SK-N-SH (cell line): ENCODE measurements at regions of chr7 and their contacts with region 1.

Region 1: DNA sequence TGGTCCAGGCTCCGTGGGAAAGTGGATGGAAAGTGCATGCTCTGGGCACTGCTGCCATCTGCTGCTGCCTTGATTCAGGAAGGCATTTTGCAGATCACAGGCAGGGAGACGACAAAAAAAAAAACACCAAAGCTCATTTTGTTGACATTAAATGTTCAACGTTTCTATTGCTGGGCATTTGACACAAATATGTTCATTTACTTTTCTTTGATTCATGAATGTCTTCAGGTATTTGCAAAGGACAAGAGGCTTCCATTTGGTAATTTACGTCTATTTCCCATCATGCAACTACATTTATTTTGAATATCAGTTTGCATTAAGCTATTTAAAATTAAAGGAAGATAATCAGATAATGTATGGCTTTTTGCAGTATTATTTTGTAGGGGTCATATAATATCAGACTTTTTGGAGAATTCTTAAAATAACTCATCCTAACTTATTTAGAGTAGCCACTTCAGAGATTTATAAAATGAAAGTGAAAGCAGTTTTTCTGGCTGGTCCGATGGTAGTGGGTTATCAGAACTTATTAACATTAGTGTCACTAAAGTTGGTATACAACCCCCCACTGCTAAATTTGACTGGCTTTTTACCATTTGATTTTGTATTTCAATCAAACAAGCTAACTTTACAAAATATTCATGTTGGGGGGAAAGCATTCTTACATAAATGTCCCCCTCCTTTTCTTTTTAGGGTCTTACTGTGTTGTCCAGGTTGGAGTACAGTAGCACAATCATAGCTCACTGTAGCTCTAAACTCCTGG is 65.3 kb downstream of the PDIA4 start:
- DNase-seq: peak; percentile 82
- H3K4me3 ChIP-seq: peak overlapping the region; percentile 56 to 69
- H3K27ac ChIP-seq: peak overlapping the region; percentile 24 to 73
- H3K4me1 ChIP-seq: no peaks in the 10 kb centered on the region; a peak in 2 of 4 replicates
- H3K27me3 ChIP-seq: no peaks in the 10 kb centered on the region
- CTCF ChIP-seq: peak; percentile 100
- EP300 ChIP-seq: no peak
- RAD21 ChIP-seq: peak; percentile 98

Region 2: GRCh38 chr7:148563583-148564274 is 399.3 kb before region 1 on chr7:
- CTCF ChIA-PET with region 1: interaction called, 17 read pairs
- POLR2A ChIA-PET with region 1: no interaction called
- DNase-seq: no peak
- H3K4me3 ChIP-seq: peak overlapping the region in 1 of 2 experiments; percentile 43; a peak in 2 of 4 replicates
- H3K27ac ChIP-seq: peak overlapping the region; percentile 13 to 79; a peak in 3 of 4 replicates
- H3K4me1 ChIP-seq: no peaks in the 10 kb centered on the region; a peak in 2 of 4 replicates
- H3K27me3 ChIP-seq: no peaks in the 10 kb centered on the region
- CTCF ChIP-seq: no peak
- EP300 ChIP-seq: no peak
- RAD21 ChIP-seq: no peak

Region 3: DNA sequence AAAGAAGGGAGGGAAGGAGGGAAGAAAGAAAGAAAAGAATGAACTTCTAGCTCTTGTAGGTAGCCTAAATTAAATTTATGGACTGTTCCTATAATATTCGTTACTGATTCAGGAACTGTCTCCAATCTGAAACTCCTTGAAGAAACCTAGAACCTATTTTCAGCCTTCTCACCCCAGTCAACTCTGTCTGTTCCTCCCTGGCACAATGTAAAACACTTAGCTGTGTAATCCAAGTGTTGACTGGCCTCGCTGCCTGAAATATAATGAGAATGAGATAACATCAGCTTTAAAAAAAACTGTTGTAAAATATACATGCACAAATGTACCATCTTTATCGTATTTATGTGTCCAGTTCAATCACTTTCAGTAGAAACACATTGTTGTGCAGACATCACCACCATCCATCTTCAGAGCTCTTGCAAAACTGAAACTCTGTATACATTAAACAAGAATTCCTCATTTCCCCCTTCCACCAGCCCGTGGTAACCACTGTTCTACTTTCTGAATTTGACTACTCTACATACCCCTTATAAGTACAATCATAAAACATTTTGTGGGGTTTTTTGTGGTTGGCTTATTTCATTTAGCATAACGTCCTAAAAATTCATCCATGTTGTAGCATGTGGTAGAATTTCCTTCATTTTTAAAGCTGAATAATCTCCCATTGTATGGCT is 378.7 kb before region 1 on chr7:
- CTCF ChIA-PET with region 1: interaction called, 114 read pairs
- POLR2A ChIA-PET with region 1: interaction called, 3 read pairs
- DNase-seq: no peak
- H3K4me3 ChIP-seq: no peak overlapping the region
- H3K27ac ChIP-seq: no peak overlapping the region
- H3K4me1 ChIP-seq: no peaks in the 10 kb centered on the region
- H3K27me3 ChIP-seq: peaks cover 17% of the 10 kb centered on the region; the same call in 1 of the 2 replicates
- CTCF ChIP-seq: no peak
- EP300 ChIP-seq: no peak
- RAD21 ChIP-seq: no peak

Region 4: DNA sequence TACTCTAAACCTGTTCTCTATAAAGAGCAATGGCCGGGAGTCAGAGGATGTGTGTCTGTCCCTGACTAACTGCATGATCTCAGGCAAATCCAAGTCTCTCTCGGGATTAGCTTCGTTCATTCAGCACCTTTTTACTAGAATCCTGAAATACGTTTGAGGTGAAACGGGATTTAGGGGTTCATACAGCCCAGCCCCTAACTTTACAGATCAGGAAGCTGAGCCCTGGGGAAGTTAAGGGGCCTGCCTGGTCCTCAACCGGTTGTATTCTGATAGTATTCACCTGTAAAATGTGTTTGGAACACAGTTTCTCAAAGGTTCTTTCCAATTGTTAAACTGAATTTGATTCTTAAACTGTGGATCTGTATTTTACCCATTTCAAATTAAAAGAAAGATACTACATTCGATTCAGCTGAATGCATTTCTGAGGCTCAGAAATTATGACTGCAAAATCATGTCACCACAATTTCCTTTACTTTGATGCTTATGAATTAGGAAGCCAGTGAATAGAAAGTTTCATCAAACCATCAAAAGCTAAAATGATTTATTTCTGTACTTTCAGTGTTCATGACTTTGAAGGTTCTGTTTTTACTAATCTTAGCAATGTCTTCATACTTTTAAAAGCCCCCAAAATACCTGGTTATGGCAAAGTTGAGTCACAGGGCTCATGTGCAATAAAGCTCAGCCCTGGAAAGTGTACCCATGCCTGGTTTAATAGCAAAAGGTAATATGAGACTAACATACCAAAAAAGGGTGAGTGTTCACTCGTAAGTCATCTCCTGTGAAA is 50.1 kb before region 1 on chr7:
- CTCF ChIA-PET with region 1: interaction called, 11 read pairs
- POLR2A ChIA-PET with region 1: no interaction called
- DNase-seq: no peak
- H3K4me3 ChIP-seq: no peak overlapping the region
- H3K27ac ChIP-seq: no peak overlapping the region
- H3K4me1 ChIP-seq: peaks cover 7 to 9% of the 10 kb centered on the region in 2 experiments; a peak in 2 of 4 replicates
- H3K27me3 ChIP-seq: peaks cover 17% of the 10 kb centered on the region; the same call in 1 of the 2 replicates
- CTCF ChIP-seq: no peak
- EP300 ChIP-seq: no peak
- RAD21 ChIP-seq: no peak

Region 5: GRCh38 chr7:148975896-148976295 is 12.9 kb after region 1 on chr7:
- CTCF ChIA-PET with region 1: interaction called, 35 read pairs
- POLR2A ChIA-PET with region 1: no interaction called
- DNase-seq: no peak
- H3K4me3 ChIP-seq: no peak overlapping the region
- H3K27ac ChIP-seq: no peak overlapping the region
- H3K4me1 ChIP-seq: no peaks in the 10 kb centered on the region
- H3K27me3 ChIP-seq: no peaks in the 10 kb centered on the region
- CTCF ChIP-seq: no peak
- EP300 ChIP-seq: no peak
- RAD21 ChIP-seq: no peak

Region 6: GRCh38 chr7:149071641-149072437 is 108.8 kb after region 1 on chr7:
- CTCF ChIA-PET with region 1: interaction called, 16 read pairs
- POLR2A ChIA-PET with region 1: no interaction called
- DNase-seq: peak; percentile 61
- H3K4me3 ChIP-seq: no peak overlapping the region
- H3K27ac ChIP-seq: no peak overlapping the region
- H3K4me1 ChIP-seq: no peaks in the 10 kb centered on the region
- H3K27me3 ChIP-seq: no peaks in the 10 kb centered on the region
- CTCF ChIP-seq: no peak
- EP300 ChIP-seq: no peak
- RAD21 ChIP-seq: 0 out of 2 replicates have a peak, but pooled peaks have one; percentile 39

Region 7: GRCh38 chr7:149140831-149141230 is 177.8 kb after region 1 on chr7:
- CTCF ChIA-PET with region 1: no interaction called
- POLR2A ChIA-PET with region 1: no interaction called
- DNase-seq: no peak
- H3K4me3 ChIP-seq: no peak overlapping the region
- H3K27ac ChIP-seq: no peak overlapping the region
- H3K4me1 ChIP-seq: no peaks in the 10 kb centered on the region; a peak in 1 of 4 replicates
- H3K27me3 ChIP-seq: no peaks in the 10 kb centered on the region
- CTCF ChIP-seq: no peak
- EP300 ChIP-seq: no peak
- RAD21 ChIP-seq: no peak